ENCODE measurements at regions of chr1 and their contacts with region 1.

Region 1: GRCh38 chr1:232416026-232416568 is 213.8 kb downstream of the SIPA1L2 start:
- DNase-seq: no peak
- ATAC-seq: no peak
- H3K4me3 ChIP-seq: no peak overlapping the region
- H3K4me3 Mint-ChIP-seq: no peak overlapping the region
- H3K27ac ChIP-seq: no peak overlapping the region
- H3K27ac Mint-ChIP-seq: no peak overlapping the region
- H3K4me1 ChIP-seq: no peaks in the 10 kb centered on the region
- H3K4me1 Mint-ChIP-seq: no peaks in the 10 kb centered on the region
- H3K27me3 ChIP-seq: no peaks in the 10 kb centered on the region
- H3K27me3 Mint-ChIP-seq: peaks cover 0 to 22% (median 11%) of the 10 kb centered on the region in 5 donors

Region 2: DNA sequence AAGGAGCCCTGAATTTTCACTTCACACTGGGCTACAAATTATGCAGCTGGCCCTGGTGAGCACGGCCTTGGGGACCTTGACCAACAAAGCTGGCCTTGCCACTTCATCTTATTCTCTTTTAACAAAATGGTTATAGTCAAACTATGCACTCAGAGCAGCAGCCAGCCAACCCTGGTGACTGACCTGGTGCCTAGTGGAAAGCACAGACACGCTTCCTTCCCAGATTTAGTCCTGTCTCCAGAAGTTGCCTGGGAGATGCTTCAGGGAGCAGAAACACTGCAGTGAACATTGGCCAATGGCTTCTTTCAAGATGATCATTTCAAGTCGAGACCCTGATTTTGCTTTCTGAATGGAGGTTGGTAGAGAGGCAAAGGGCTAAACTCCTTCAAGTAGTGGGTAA is 35.5 kb before region 1 on chr1:
- CTCF ChIA-PET with region 1: no interaction called
- POLR2A ChIA-PET with region 1: no interaction called
- intact Hi-C with region 1: loop called in 1 of 2 experiments (anchors 1 kb)
- DNase-seq: no peak
- ATAC-seq: no peak
- H3K4me3 ChIP-seq: no peak overlapping the region
- H3K4me3 Mint-ChIP-seq: no peak overlapping the region
- H3K27ac ChIP-seq: no peak overlapping the region
- H3K27ac Mint-ChIP-seq: no peak overlapping the region
- H3K4me1 ChIP-seq: no peaks in the 10 kb centered on the region
- H3K4me1 Mint-ChIP-seq: peaks cover 0 to 3% (median 0%) of the 10 kb centered on the region in 7 donors
- H3K27me3 ChIP-seq: no peaks in the 10 kb centered on the region
- H3K27me3 Mint-ChIP-seq: peaks cover 0 to 9% (median 0%) of the 10 kb centered on the region in 5 donors

Region 3: GRCh38 chr1:232568331-232568852 is 152.3 kb after region 1 on chr1:
- CTCF ChIA-PET with region 1: no interaction called
- POLR2A ChIA-PET with region 1: no interaction called
- intact Hi-C with region 1: no loop called
- DNase-seq: no peak
- ATAC-seq: no peak
- H3K4me3 ChIP-seq: no peak overlapping the region
- H3K4me3 Mint-ChIP-seq: no peak overlapping the region
- H3K27ac ChIP-seq: no peak overlapping the region
- H3K27ac Mint-ChIP-seq: no peak overlapping the region
- H3K4me1 ChIP-seq: peaks cover 0 to 5% of the 10 kb centered on the region in 2 donors
- H3K4me1 Mint-ChIP-seq: peaks cover 0 to 13% (median 0%) of the 10 kb centered on the region in 7 donors
- H3K27me3 ChIP-seq: no peaks in the 10 kb centered on the region
- H3K27me3 Mint-ChIP-seq: peaks cover 0 to 5% (median 0%) of the 10 kb centered on the region in 5 donors

Measured in naive thymus-derived CD4-positive, alpha-beta T cell (primary cell).